Colonic mucosa (tissue), 4 donors: ENCODE measurements at regions of chr5 and their contacts with region 1.

Region 1: DNA sequence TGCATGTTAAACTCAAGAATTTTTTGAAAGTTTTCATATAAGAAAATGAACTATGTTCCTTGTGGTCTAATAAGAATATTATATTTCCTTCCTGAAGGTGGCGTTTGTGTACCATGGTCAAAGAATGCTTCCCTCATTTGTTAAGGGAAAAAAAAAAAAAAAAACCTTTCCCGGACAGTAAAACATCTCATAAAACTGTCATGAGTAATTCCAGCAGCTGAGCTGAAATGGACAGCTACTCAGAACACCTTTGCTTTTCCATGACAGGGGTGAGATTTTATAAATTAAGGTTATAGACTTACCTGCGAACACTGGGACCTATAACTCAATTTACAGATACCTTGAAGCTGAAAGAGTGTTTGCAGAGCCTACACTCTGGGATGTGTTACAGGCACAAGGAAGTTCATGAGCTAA is 113.2 kb upstream of the RANBP3L start:
- DNase-seq: no peak
- H3K4me3 ChIP-seq: no peak overlapping the region
- H3K27ac ChIP-seq: no peak overlapping the region
- H3K4me1 ChIP-seq: no peaks in the 10 kb centered on the region
- H3K27me3 ChIP-seq: no peaks in the 10 kb centered on the region
- CTCF ChIP-seq: no peak

Region 2: GRCh38 chr5:36507332-36507952 is 92.6 kb after region 1 on chr5:
- intact Hi-C with region 1: loop called (anchors 2 kb)
- DNase-seq: peak; percentile 71
- H3K4me3 ChIP-seq: no peak overlapping the region
- H3K27ac ChIP-seq: no peak overlapping the region
- H3K4me1 ChIP-seq: no peaks in the 10 kb centered on the region
- H3K27me3 ChIP-seq: no peaks in the 10 kb centered on the region
- CTCF ChIP-seq: peak; percentile 75

Region 3: GRCh38 chr5:36690041-36690961 is 275.4 kb after region 1 on chr5:
- intact Hi-C with region 1: loop called (anchors 2 kb)
- DNase-seq: peak; percentile 76
- H3K4me3 ChIP-seq: peak overlapping the region; percentile 52
- H3K27ac ChIP-seq: peak overlapping the region; percentile 36
- H3K4me1 ChIP-seq: no peaks in the 10 kb centered on the region
- H3K27me3 ChIP-seq: no peaks in the 10 kb centered on the region
- CTCF ChIP-seq: peak; percentile 71